ENCODE measurements at regions of chr19 and their contacts with region 1.

Region 1: DNA sequence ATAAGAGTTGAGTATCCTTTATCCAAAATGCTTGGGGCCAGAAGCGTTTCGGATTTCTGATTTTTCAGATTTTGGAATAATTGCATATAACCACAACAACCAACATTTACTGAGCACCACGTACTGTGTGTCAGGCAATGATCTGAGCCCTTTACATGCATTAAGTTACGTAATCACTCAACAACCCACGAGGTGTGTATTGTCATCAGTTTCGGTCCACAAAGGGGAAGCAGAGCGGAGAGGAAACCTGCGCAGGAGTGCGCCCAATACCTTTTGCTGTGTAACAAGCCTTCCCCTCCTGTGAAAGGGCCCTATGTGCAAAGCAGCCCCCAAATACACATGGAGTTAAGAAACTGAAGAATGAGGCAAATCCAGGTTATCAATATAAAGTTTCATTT is 20.7 kb upstream of the NLRP12 start:
- DNase-seq: no peak
- H3K4me3 Mint-ChIP-seq: no peak overlapping the region
- H3K27ac Mint-ChIP-seq: no peak overlapping the region
- H3K4me1 Mint-ChIP-seq: peaks cover 5% of the 10 kb centered on the region
- H3K27me3 Mint-ChIP-seq: peaks cover 14% of the 10 kb centered on the region

Region 2: GRCh38 chr19:53792721-53793433 is 52.0 kb before region 1 on chr19:
- CTCF ChIA-PET with region 1: interaction called, 5 read pairs
- intact Hi-C with region 1: loop called (anchors 5 kb)
- DNase-seq: peak; percentile 86
- H3K4me3 Mint-ChIP-seq: no peak overlapping the region
- H3K27ac Mint-ChIP-seq: no peak overlapping the region
- H3K4me1 Mint-ChIP-seq: no peaks in the 10 kb centered on the region
- H3K27me3 Mint-ChIP-seq: no peaks in the 10 kb centered on the region

Region 3: DNA sequence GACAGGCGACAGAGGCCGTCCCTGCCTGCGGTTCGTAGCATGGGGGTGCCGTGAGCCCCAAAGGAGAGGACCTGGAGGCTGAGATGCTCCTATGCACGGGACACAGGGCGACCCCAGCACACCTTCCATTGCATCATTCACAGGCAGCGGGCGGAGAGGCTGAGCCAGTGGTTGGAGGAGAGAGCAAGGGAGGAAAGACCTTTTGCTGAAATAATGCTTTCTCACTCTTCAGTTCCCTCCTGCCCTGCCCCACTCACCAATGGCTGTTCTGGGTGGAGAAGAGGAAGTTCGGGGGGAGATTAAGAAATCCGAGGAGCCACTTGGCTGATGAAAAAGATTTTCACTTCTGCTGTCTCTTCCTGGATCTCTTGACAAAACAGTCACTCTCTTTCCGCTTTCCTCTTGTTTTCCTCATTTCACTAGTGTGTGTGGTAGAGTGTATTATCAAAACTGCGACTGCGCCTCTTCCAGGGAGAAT is 20.7 kb before region 1 on chr19 and contains the start of gene NLRP12:
- CTCF ChIA-PET with region 1: no interaction called
- intact Hi-C with region 1: no loop called
- DNase-seq: no peak
- H3K4me3 Mint-ChIP-seq: peak within 1 kb of the TSS; percentile 45
- H3K27ac Mint-ChIP-seq: no peak within 1 kb of the TSS
- H3K4me1 Mint-ChIP-seq: peaks cover 4% of the 10 kb centered on the region
- H3K27me3 Mint-ChIP-seq: peaks cover 25% of the 10 kb centered on the region
- total RNA-seq, gene NLRP12: not detected

Region 4: DNA sequence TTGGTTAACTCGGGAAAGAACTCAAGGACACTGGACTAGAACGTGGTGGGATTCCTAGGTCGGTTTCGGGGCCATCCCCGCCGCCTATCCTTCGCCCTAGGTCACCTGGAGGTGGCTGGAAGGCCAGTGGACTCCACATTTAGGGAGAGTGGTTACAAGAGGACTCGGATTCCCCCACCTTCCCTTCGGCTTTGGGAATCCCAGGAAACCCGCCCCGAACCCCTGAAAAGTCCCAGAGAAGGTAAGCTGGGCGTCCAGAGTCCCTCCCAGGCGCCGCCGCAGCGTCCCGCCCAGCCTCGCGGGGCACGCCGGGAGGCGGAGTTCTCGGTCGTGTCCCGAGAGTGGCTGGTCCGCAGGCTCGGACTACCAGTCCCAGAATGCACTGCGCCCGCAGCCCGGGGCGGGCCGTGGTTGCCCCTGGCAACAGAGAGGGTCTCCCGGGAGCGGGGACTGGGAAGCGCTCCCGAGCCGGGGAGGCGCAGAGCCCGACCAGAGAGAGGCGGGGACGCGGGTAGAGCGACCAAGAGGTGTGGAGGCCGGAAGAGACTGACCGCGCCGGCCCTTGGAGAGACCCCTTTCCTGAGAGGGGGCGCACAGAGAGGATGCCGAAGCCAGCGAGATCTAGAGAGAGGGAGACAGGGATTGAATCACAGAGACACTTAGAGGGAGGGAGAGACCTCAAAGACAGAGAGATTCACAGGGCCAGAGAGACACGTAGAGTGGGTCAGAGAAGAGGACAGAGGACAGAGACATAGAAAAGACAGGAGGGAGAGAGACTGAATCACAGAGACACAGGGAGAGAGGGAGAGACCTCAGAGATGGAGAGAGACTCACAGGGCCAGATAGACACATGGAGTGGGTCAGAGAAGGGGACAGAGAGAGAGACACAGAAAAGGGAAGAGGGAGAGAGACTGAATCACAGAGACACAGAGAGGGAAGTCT is 34.6 kb after region 1 on chr19:
- CTCF ChIA-PET with region 1: no interaction called
- intact Hi-C with region 1: loop called (anchors 1 kb)
- DNase-seq: peak; percentile 85
- H3K4me3 Mint-ChIP-seq: no peak overlapping the region
- H3K27ac Mint-ChIP-seq: peak overlapping the region; percentile 14
- H3K4me1 Mint-ChIP-seq: peaks cover 47% of the 10 kb centered on the region
- H3K27me3 Mint-ChIP-seq: peaks cover 12% of the 10 kb centered on the region

Region 5: DNA sequence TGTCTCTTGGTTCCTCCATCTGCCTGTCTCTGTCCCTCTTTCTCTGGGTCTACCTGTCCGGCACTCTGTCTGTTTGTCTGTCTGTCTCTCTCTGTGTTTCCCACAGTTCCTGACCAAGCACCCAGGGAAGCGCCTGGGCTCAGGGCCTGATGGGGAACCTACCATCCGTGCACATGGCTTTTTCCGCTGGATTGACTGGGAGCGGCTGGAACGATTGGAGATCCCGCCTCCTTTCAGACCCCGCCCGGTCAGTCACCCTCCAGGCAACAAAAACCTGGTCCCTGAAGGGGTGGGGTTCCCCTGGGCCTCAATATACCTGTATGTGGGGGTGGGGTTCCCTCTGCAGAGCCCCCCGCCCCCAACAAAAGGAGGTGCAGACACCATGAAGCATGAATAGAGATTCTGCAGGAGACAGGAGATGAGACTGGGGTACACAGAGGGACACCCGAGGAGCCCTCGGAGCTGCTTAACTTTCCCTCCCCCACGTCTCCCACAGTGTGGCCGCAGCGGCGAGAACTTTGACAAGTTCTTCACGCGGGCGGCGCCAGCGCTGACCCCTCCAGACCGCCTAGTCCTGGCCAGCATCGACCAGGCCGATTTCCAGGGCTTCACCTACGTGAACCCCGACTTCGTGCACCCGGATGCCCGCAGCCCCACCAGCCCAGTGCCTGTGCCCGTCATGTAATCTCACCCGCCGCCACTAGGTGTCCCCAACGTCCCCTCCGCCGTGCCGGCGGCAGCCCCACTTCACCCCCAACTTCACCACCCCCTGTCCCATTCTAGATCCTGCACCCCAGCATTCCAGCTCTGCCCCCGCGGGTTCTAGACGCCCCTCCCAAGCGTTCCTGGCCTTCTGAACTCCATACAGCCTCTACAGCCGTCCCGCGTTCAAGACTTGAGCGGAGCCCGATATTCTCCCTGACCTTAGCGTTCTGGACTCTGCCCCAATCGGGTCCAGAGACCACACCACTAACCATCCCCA is 61.7 kb after region 1 on chr19:
- CTCF ChIA-PET with region 1: no interaction called
- intact Hi-C with region 1: loop called (anchors 1 kb)
- DNase-seq: peak; percentile 69
- H3K4me3 Mint-ChIP-seq: no peak overlapping the region
- H3K27ac Mint-ChIP-seq: no peak overlapping the region
- H3K4me1 Mint-ChIP-seq: peaks cover 24% of the 10 kb centered on the region
- H3K27me3 Mint-ChIP-seq: peaks cover 69% of the 10 kb centered on the region

Region 6: GRCh38 chr19:54023191-54023590 is 178.3 kb after region 1 on chr19:
- CTCF ChIA-PET with region 1: interaction called, 18 read pairs
- intact Hi-C with region 1: loop called (anchors 1 kb)
- DNase-seq: no peak
- H3K4me3 Mint-ChIP-seq: no peak overlapping the region
- H3K27ac Mint-ChIP-seq: no peak overlapping the region
- H3K4me1 Mint-ChIP-seq: peaks cover 2% of the 10 kb centered on the region
- H3K27me3 Mint-ChIP-seq: peaks cover 33% of the 10 kb centered on the region

Region 7: GRCh38 chr19:54029930-54030490 is 185.2 kb after region 1 on chr19:
- CTCF ChIA-PET with region 1: interaction called, 18 read pairs
- intact Hi-C with region 1: loop called (anchors 1 kb)
- DNase-seq: peak; percentile 72
- H3K4me3 Mint-ChIP-seq: no peak overlapping the region
- H3K27ac Mint-ChIP-seq: no peak overlapping the region
- H3K4me1 Mint-ChIP-seq: peaks cover 1% of the 10 kb centered on the region
- H3K27me3 Mint-ChIP-seq: peaks cover 15% of the 10 kb centered on the region